ENCODE measurements at regions of chr7 and their contacts with region 1.

Region 1: DNA sequence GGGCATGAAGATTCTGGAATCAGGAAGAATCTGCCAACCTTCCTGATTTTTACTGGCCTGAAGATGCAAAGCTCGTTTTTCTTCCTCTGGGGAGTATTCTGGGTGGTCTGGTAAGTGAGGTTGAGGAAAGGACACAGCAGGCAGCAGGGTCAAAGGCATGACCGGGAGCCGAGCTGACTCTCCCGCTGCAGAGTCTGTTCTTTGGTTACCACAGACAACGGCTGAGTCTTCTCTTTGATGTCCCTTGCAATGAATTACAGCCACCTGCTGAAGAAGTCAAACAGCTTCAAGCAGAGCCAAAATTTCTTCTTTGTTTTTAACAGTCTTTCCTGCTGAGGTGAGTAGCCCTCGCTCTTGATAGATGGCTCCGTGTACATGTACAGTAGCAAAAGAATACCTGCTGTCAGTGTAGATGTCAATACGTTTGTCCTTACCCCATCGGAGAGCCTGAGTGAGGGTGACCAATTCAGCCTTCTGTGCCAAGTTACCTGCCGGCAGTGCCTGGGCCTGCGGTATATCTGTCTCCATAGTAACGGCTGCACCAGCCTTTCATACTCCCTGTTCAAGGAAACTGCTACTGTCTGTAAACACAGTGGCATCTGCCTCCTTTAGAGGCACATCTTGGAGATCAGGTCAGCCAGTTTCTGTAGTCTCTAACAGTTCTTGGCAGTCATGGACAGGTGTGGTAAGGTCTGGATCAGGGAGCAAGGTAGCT is 76.4 kb downstream of the PRR15 start:
- DNase-seq: no peak
- H3K4me3 ChIP-seq: no peak overlapping the region
- H3K27ac ChIP-seq: no peak overlapping the region
- H3K4me1 ChIP-seq: no peaks in the 10 kb centered on the region
- H3K27me3 ChIP-seq: no peaks in the 10 kb centered on the region
- CTCF ChIP-seq: no peak

Region 2: GRCh38 chr7:29442146-29442545 is 197.9 kb before region 1 on chr7:
- CTCF ChIA-PET with region 1: no interaction called
- dilution Hi-C with region 1: no loop called
- in situ Hi-C with region 1: no loop called
- intact Hi-C with region 1: no loop called
- DNase-seq: peak; percentile 70
- H3K4me3 ChIP-seq: no peak overlapping the region
- H3K27ac ChIP-seq: no peak overlapping the region
- H3K4me1 ChIP-seq: peaks cover 12% of the 10 kb centered on the region
- H3K27me3 ChIP-seq: no peaks in the 10 kb centered on the region
- CTCF ChIP-seq: no peak

Region 3: DNA sequence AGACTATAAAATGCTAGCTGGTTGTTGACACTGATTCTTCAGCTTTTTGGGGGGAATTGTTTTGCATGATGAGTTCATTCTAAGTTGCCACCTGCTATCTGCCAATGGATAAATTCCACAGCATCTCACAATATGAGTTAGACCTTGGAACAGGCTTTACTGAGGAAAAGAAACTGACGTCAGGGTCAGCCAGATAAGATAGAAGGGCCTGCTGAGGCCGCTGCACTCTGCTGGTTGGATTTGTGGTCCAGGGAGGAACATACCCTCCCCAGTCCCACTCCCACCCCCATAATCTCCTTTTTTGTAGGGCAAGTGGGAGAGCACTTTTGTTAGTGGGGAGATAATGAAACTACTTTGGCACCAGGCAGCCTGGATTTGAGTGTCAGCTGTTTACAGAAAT is 187.0 kb before region 1 on chr7:
- CTCF ChIA-PET with region 1: no interaction called
- dilution Hi-C with region 1: no loop called
- in situ Hi-C with region 1: no loop called
- intact Hi-C with region 1: no loop called
- DNase-seq: no peak
- H3K4me3 ChIP-seq: no peak overlapping the region
- H3K27ac ChIP-seq: no peak overlapping the region
- H3K4me1 ChIP-seq: peaks cover 6% of the 10 kb centered on the region
- H3K27me3 ChIP-seq: no peaks in the 10 kb centered on the region
- CTCF ChIP-seq: no peak

Region 4: GRCh38 chr7:29748286-29749108 is 108.5 kb after region 1 on chr7:
- CTCF ChIA-PET with region 1: interaction called, 5 read pairs
- dilution Hi-C with region 1: no loop called
- in situ Hi-C with region 1: no loop called
- intact Hi-C with region 1: loop called (anchors 2 kb)
- DNase-seq: peak; percentile 15
- H3K4me3 ChIP-seq: no peak overlapping the region
- H3K27ac ChIP-seq: no peak overlapping the region
- H3K4me1 ChIP-seq: no peaks in the 10 kb centered on the region
- H3K27me3 ChIP-seq: peaks cover 5% of the 10 kb centered on the region
- CTCF ChIP-seq: peak; percentile 23 to 64

Region 5: DNA sequence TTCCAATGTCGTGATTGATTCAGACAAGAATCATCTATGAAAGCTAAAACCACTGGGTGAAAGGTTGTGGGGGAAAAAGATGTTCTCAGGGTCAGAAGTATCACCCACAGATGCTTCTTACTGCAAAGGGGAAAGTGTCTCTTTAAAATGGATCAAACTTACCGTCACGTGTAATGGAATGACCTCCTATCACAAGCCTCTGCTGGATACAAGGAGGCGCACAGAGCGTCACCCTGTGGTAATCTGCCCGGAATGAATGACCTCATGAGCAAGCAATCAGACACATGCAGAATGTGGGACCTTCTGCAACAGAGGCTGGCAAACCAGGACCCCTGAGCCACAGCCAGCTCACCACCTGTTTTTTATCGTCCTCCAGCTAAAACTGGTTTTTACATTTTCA is 199.3 kb after region 1 on chr7:
- CTCF ChIA-PET with region 1: no interaction called
- dilution Hi-C with region 1: no loop called
- in situ Hi-C with region 1: no loop called
- intact Hi-C with region 1: no loop called
- DNase-seq: peak; percentile 4
- H3K4me3 ChIP-seq: no peak overlapping the region
- H3K27ac ChIP-seq: no peak overlapping the region
- H3K4me1 ChIP-seq: no peaks in the 10 kb centered on the region
- H3K27me3 ChIP-seq: peaks cover 7% of the 10 kb centered on the region
- CTCF ChIP-seq: no peak

Region 6: DNA sequence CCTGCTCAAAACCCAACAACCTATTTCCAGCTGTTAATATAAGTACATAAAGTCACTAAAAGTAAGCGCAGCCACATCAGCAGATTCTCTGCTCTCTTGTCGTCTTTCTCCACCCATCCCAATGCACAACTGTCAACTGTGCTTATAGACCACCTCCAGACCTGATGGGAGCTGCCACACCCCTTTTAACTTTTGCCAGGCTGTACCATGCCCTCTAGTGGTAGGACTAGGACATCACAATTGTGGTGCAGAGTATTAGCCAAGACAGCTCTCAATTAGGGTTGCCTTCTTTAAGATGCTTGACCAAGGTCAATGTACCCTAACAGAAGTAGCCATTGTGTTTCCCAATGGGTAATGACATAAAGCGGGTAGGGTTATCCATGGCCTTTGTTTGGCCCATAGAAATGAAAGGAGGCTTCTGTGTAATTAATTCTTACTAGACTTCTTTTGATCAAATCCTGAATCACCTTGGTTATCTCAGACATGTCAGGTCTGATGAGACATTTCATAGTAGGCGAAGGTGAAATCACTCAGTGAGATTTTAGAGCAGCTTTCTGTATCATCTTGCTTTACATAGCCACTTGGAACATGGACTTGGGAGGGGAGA is 281.5 kb after region 1 on chr7:
- CTCF ChIA-PET with region 1: no interaction called
- dilution Hi-C with region 1: no loop called
- in situ Hi-C with region 1: loop called in 1 of 2 experiments (anchors 25 kb)
- intact Hi-C with region 1: loop called (anchors 1 kb)
- DNase-seq: peak; percentile 45
- H3K4me3 ChIP-seq: no peak overlapping the region
- H3K27ac ChIP-seq: no peak overlapping the region
- H3K4me1 ChIP-seq: no peaks in the 10 kb centered on the region
- H3K27me3 ChIP-seq: no peaks in the 10 kb centered on the region
- CTCF ChIP-seq: peak; percentile 90 to 94

Region 7: DNA sequence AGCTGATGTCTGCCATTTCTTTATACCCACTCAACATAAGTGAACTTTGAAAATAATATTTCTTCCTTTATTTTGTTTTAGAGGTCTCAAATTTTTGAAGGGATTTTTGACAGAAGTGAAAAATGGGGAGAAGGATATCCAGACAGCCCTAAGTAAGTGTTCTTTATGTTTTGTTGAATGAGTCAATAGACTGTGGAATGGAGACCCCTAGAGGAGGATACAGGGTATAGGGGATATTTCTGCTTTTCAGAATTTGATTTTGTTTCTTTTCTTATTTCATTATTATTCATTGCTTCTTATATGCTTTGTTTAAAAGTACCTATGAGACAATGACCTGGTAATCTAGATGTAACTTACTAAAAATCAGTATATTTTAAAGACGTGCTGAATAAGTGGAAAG is 422.6 kb after region 1 on chr7:
- CTCF ChIA-PET with region 1: no interaction called
- dilution Hi-C with region 1: no loop called
- in situ Hi-C with region 1: no loop called
- intact Hi-C with region 1: loop called (anchors 2 kb)
- DNase-seq: peak; percentile 5
- H3K4me3 ChIP-seq: no peak overlapping the region
- H3K27ac ChIP-seq: no peak overlapping the region
- H3K4me1 ChIP-seq: no peaks in the 10 kb centered on the region
- H3K27me3 ChIP-seq: no peaks in the 10 kb centered on the region
- CTCF ChIP-seq: peak; percentile 50 to 53